Colonic mucosa (tissue), 4 donors: ENCODE measurements at regions of chr3 and their contacts with region 1.

Region 1: GRCh38 chr3:25594007-25594502 is 70.7 kb downstream of the TOP2B start:
- DNase-seq: no peak
- H3K4me3 ChIP-seq: no peak overlapping the region
- H3K27ac ChIP-seq: no peak overlapping the region
- H3K4me1 ChIP-seq: no peaks in the 10 kb centered on the region
- H3K27me3 ChIP-seq: no peaks in the 10 kb centered on the region
- CTCF ChIP-seq: peak; percentile 75

Region 2: DNA sequence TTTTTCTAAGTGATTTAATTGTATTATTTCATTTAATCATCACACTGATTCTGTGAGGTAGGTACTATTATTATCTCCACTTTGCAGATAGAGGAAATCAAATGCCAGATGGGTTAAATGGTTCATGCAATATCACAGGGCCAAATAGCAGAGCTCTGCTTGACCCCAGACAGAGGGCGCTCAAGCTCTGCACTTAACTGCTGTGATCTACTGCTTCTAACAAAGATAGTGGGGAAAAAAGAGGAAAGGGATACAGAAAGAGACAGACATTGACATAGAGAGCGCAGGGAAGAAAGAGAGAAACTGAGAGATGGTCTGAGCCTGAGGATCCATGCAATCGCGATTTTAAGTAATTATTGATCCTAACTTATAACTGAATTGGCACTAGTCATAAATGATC is 820.3 kb before region 1 on chr3:
- intact Hi-C with region 1: loop called (anchors 5 kb)
- DNase-seq: peak; percentile 30
- H3K4me3 ChIP-seq: no peak overlapping the region
- H3K27ac ChIP-seq: no peak overlapping the region
- H3K4me1 ChIP-seq: no peaks in the 10 kb centered on the region
- H3K27me3 ChIP-seq: no peaks in the 10 kb centered on the region
- CTCF ChIP-seq: peak; percentile 62

Region 3: DNA sequence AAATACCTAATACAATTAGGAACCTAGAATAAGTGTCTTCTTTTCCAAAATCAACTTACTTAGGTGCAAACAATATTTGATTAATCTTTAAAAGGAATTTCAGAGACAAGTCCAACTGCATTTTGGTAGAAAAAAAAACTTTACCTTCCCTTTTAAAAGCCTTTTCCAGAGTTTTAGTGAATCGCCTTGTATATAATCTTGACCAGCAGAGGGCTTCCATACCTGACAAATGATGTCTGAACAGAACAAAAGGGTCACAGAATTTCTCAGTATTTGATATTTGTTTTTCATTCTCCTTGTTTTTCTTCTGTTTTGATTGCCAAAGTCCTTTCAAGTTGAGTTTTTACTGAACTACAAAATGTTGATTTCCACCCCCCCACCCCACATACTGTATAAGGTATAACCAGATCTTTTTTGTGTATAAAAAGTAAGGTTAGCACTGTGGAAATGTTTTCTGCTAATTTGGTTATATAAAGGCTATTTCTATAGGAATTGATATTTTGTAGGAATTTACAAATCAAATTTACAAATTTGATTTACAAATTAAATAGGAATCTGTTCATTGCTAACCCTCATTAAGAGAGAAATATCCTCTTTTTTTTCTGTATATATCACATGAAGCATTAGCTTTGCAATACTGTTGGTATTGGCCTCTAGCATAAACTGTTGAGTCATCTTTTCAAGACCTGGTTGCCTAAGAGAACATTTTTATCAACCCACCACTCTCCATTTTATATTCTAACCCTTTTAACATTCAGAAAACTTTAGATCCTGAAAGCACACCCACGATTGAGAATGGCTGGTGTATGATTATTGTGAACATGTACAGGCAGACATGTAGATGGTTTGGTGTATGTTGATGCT is 630.1 kb before region 1 on chr3:
- intact Hi-C with region 1: loop called (anchors 5 kb)
- DNase-seq: no peak
- H3K4me3 ChIP-seq: no peak overlapping the region
- H3K27ac ChIP-seq: no peak overlapping the region
- H3K4me1 ChIP-seq: no peaks in the 10 kb centered on the region
- H3K27me3 ChIP-seq: no peaks in the 10 kb centered on the region
- CTCF ChIP-seq: peak; percentile 30

Region 4: GRCh38 chr3:25021816-25022215 is 572.2 kb before region 1 on chr3:
- intact Hi-C with region 1: loop called (anchors 5 kb)
- DNase-seq: no peak
- H3K4me3 ChIP-seq: no peak overlapping the region
- H3K27ac ChIP-seq: no peak overlapping the region
- H3K4me1 ChIP-seq: no peaks in the 10 kb centered on the region
- H3K27me3 ChIP-seq: no peaks in the 10 kb centered on the region
- CTCF ChIP-seq: no peak

Region 5: DNA sequence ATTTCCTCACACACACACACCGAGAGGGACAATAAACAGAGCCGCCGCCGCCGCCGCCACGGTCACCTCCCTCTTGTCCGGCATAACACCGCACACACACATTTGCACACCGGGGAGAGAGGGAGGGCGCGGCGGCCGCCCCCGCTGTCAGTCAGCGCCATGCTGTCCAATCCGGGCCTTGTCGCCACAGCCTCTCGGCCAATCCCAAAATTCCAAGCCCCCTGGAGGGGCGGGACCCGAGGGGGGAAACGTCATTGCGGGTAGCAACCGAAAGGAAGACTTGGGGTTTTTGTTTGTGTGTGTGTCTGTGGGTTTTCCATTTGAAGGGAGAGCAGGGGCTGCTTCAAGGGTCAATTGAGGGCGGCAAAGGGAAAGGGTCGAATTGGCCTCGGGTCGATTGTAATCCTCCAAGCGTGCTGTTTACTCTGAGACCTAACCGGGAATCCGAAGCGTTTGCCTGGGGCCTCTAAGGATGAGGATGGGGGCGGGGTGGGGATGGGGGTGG is 70.8 kb after region 1 on chr3 and contains the start of gene TOP2B:
- intact Hi-C with region 1: no loop called
- DNase-seq: peak; percentile 97
- H3K4me3 ChIP-seq: peak within 1 kb of the TSS; percentile 72
- H3K27ac ChIP-seq: peak within 1 kb of the TSS; percentile 95
- H3K4me1 ChIP-seq: no peaks in the 10 kb centered on the region
- H3K27me3 ChIP-seq: no peaks in the 10 kb centered on the region
- CTCF ChIP-seq: no peak
- total RNA-seq, gene TOP2B: 105 TPM

Region 6: GRCh38 chr3:25695731-25696420 is 101.8 kb after region 1 on chr3:
- intact Hi-C with region 1: no loop called
- DNase-seq: no peak
- H3K4me3 ChIP-seq: no peak overlapping the region
- H3K27ac ChIP-seq: no peak overlapping the region
- H3K4me1 ChIP-seq: no peaks in the 10 kb centered on the region
- H3K27me3 ChIP-seq: no peaks in the 10 kb centered on the region
- CTCF ChIP-seq: no peak